Activated CD4-positive, alpha-beta T cell treated with anti-CD3 and anti-CD28 coated beads, Interleukin-2, amount 10 ng/mL, durations not matched to agents 24 days and 14 days (primary cell): ENCODE measurements at regions of chr10 and their contacts with region 1.

Region 1: DNA sequence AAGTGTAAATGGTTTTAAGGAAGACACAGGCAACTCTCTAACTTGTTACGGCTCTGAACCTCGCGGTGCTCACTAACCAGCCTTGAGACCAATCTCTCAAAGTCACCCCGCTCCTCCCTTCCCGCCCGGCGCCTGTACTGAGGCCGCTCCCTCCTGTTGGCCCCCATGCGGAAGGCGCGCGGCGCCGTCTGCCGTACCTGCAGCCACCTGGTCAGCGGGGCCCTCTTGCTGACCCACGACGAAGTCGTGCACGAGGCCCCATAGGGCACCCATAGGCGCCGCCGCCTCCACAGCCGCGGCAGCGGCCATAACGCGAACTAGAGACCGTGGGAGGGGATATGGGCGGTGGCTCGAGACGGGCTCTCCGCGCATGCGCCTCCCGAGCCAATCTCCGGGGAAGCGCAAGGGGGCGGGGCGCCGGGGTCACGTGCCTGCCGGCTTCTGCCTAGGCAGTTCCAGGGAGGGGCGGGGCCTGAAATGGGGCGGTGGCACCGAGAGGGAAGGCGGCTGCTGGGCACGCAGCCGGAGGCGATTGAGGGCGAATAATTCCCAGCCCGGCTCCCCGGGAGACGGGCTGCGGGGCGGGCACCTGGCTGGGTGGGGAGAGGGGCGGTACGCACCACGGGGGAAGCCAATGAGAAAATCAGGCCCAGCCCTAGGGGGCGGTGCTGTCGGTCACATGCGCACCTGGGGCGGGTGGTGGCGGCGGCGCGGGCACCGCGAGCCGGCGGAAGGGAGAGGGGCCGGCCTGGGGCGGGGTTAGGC is at the start of gene MMS19:
- DNase-seq: peak; percentile 100
- H3K4me3 Mint-ChIP-seq: peak within 1 kb of the TSS; percentile 94
- H3K27ac Mint-ChIP-seq: peak within 1 kb of the TSS; percentile 100
- H3K4me1 Mint-ChIP-seq: peaks cover 38% of the 10 kb centered on the region
- H3K27me3 Mint-ChIP-seq: peaks cover 33% of the 10 kb centered on the region
- total RNA-seq, gene MMS19: 100 and 103 TPM in 2 replicates

Region 2: DNA sequence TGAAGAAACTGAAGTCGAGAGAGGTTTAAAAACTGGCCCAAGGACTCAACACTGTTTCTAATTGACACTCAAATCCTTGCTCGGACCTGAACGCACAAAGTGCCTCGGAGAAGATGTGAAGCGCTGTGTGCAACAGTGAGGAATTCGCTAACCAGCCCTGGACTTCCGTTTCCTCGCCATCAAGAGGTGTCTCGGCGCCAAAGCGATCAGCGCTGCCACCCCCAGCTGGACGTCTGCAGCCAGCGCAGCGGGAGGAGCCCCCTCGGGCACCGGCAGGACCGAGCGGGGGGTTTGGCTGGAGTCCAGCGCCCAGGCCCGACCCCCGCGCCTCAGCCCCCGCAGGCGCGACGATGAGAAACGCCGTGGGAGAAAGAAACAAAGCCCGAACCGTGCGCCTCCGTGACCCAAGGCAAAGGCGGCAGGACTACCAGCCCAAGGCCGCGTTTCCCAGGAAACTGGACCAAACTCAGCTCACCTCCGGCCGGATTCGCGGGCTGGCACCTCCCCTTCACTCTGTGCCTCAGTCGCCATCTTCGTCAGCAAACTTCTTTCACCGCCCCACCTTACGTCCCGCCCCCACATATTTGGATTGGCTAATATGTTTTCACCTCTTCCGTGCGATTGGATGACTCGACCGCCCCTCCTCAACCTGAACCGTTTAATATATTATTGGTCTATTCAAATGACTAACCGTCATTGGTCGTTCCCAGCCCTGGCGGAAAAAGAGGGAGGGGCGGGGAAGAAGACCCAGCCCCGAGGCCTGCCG is 206.0 kb before region 1 on chr10 and contains the start of gene ARHGAP19:
- intact Hi-C with region 1: loop called (anchors 1 kb)
- DNase-seq: peak; percentile 98
- H3K4me3 Mint-ChIP-seq: peak within 1 kb of the TSS; percentile 88
- H3K27ac Mint-ChIP-seq: peak within 1 kb of the TSS; percentile 87
- H3K4me1 Mint-ChIP-seq: peaks cover 23% of the 10 kb centered on the region
- H3K27me3 Mint-ChIP-seq: no peaks in the 10 kb centered on the region
- total RNA-seq, gene ARHGAP19: 26.4 and 30.7 TPM in 2 replicates

Region 3: DNA sequence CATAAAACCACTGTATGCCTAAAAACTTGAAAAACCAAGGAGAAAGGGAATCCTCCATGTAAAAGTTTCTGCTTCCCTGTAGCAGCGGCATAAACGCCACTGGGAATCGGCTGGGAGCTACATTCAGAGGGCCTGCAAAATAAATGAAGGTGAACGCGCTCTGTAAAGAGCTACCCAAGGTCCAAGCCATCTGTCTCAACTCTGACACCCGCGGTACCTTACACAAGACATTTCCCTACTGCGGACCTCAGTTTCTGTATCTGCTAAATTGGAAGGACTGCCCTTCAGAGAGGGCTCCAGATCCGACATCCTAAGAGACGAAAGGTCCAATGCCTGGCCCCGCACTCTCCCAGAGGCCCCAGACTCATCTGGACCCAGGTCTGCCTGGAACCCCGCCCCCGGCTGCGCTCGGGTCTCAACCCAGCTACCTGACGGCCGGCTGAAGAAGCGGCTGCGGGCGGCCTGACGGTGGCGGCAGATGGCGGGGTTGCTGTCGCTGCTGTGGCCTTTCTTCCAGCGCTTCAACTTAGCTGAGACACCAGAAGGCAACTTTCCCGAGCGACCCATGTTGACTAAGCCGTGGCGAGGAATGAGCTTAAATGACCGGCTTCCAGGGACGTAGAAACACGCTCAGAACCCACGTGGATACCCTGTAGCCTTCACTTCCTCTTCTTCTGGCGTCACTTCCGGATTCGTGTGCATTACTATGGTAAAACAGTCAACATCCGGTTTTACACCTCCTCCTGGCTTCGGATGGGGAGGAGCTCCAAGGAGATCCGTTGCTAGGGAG is 97.4 kb before region 1 on chr10 and contains the start of gene RRP12:
- intact Hi-C with region 1: loop called (anchors 1 kb)
- DNase-seq: peak; percentile 97
- H3K4me3 Mint-ChIP-seq: peak within 1 kb of the TSS; percentile 97
- H3K27ac Mint-ChIP-seq: peak within 1 kb of the TSS; percentile 94
- H3K4me1 Mint-ChIP-seq: peaks cover 16% of the 10 kb centered on the region
- H3K27me3 Mint-ChIP-seq: no peaks in the 10 kb centered on the region
- total RNA-seq, gene RRP12: 99.4 and 106 TPM in 2 replicates

Region 4: DNA sequence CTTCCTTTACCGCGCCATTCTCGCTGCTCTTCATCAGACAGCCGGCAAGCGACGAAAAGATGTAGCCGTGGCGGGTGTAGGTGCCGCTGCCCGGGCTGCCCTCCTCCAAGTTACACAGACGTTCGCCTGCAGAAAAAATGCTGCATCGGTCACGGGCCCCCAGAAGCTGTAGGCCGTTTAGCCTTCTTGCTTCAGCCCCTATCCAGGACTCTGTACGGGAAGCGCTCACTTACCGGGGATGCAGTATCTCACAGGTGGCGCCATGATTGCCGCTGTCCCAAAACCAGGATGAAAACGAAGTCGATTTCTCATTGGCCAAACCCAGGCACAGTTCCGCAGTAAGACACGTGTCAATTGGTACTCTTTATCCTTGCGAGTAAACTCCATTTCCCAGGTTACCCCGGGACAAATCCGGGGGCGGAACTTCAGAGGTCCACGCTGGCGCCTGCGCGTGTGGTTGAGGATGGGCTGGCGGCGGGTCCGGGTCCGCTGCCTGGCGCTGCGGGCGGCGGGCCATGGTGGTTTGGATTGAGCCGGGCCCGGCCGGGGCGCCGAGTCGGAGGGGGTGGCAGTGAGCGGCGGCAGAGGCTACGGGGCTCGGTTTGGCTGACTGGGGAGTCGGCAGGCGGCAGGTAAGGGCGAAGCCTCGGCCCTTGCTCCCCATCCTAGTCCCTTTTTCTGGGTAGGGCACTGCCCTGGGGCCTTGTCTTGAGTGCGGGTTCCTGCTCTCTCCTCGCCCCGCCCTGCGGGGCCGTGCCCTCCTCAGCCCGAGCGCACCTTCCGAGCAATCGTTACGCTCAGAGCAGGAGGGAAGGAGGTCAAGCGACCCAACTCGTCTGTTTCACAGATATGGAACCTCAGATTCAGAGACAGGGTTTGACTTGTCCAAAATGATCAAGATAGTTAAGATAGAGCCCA is 52.3 kb before region 1 on chr10 and contains the starts of genes EXOSC1 and ZDHHC16:
- intact Hi-C with region 1: loop called (anchors 1 kb)
- DNase-seq: peak; percentile 98
- H3K4me3 Mint-ChIP-seq: peak within 1 kb of the TSS; percentile 95
- H3K27ac Mint-ChIP-seq: peak within 1 kb of the TSS; percentile 70
- H3K4me1 Mint-ChIP-seq: peaks cover 47% of the 10 kb centered on the region
- H3K27me3 Mint-ChIP-seq: no peaks in the 10 kb centered on the region
- total RNA-seq, gene EXOSC1: 57.9 and 59.8 TPM in 2 replicates
- total RNA-seq, gene ZDHHC16: 42.9 and 43.1 TPM in 2 replicates

Region 5: GRCh38 chr10:97553575-97554031 is 55.3 kb after region 1 on chr10:
- intact Hi-C with region 1: loop called (anchors 2 kb)
- DNase-seq: peak; percentile 88
- H3K4me3 Mint-ChIP-seq: no peak overlapping the region
- H3K27ac Mint-ChIP-seq: no peak overlapping the region
- H3K4me1 Mint-ChIP-seq: peaks cover 6% of the 10 kb centered on the region
- H3K27me3 Mint-ChIP-seq: peaks cover 2% of the 10 kb centered on the region

Region 6: DNA sequence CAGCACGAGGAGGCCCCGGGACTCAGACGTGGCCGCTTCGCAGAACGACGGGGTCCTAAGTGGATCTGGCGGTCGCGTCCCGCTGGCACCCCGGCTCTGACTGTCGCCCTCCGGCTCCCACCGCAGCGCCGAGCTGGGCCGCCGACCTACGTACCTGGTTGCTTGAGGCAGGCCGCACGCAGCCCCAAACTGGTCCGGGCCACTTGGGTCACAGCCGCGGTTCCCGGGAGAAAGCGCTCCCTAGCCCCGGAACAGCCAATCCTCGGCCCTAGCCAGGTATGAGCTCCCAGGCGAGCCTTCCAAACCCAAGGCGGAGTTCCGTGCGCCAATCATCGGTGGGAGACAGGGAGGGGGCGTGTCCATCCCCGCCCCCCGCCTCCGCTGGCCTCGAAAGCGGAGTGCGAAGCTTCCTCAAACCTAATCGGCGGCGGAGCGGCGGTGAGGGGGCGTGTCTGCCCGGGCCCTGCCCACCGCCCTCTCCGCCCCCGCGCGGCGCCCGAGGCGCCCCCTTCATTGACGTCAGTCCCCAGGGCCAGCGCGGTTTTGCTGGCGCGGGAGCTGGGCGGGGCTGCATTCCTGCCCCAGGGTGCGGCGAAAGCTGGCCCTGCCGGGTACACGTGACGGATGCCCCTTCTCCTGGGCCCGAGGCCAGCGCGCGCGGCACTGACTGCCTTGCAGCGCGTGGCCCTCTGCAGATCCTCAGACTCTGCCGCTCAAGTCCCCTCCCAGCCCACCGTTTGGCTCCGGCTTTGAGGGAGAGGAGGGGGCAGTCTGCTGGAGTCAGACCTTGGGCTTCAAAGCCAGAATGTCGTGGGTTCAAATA is 188.9 kb after region 1 on chr10 and contains the start of gene AVPI1:
- intact Hi-C with region 1: loop called (anchors 1 kb)
- DNase-seq: peak; percentile 98
- H3K4me3 Mint-ChIP-seq: peak within 1 kb of the TSS; percentile 82
- H3K27ac Mint-ChIP-seq: peak within 1 kb of the TSS; percentile 72
- H3K4me1 Mint-ChIP-seq: peaks cover 14% of the 10 kb centered on the region
- H3K27me3 Mint-ChIP-seq: peaks cover 4% of the 10 kb centered on the region
- total RNA-seq, gene AVPI1: 1.1 and 1.3 TPM in 2 replicates